K562 (cell line): ENCODE measurements at regions of chr6 and their contacts with region 1.

Region 1: GRCh38 chr6:46221222-46221793 is 50.5 kb upstream of the ENPP5 start:
- DNase-seq: peak; percentile 18 to 41 (median 35)
- ATAC-seq: peak; percentile 77
- H3K4me3 ChIP-seq: no peak overlapping the region
- H3K27ac ChIP-seq: no peak overlapping the region
- H3K4me1 ChIP-seq: no peaks in the 10 kb centered on the region
- H3K27me3 ChIP-seq: no peaks in the 10 kb centered on the region
- CTCF ChIP-seq: peak; percentile 46 to 75 (median 60); a peak in 5 of 6 replicates
- EP300 ChIP-seq: no peak
- POLR2A ChIP-seq: no peak
- RAD21 ChIP-seq: peak; percentile 56 to 72

Region 2: DNA sequence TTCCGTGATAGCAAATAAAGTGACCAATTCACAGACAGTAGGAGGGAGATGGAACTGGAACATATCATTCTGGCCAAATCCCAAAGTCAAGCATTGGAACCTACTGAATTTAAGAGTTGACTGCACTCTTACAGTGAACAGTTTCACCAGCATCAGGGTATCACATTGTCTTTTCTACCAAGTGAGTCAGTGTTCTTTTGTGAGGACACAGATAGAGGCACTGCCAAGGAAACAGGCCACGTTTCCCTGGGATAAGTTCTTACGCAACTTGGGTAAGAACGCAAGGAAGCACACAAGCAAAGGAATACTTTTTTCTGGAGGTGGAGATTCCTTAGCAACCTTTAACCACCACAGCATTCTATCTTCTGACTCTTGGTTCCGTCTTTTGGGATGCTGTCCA is 21.9 kb before region 1 on chr6:
- CTCF ChIA-PET with region 1: no interaction called
- POLR2A ChIA-PET with region 1: no interaction called
- in situ Hi-C with region 1: no loop called
- intact Hi-C with region 1: no loop called
- DNase-seq: no peak
- ATAC-seq: no peak
- H3K4me3 ChIP-seq: no peak overlapping the region
- H3K27ac ChIP-seq: no peak overlapping the region
- H3K4me1 ChIP-seq: no peaks in the 10 kb centered on the region
- H3K27me3 ChIP-seq: no peaks in the 10 kb centered on the region
- CTCF ChIP-seq: no peak
- EP300 ChIP-seq: no peak
- POLR2A ChIP-seq: no peak
- RAD21 ChIP-seq: no peak

Region 3: GRCh38 chr6:46347669-46348068 is 126.4 kb after region 1 on chr6:
- CTCF ChIA-PET with region 1: no interaction called
- POLR2A ChIA-PET with region 1: no interaction called
- in situ Hi-C with region 1: no loop called
- intact Hi-C with region 1: no loop called
- DNase-seq: no peak
- ATAC-seq: no peak
- H3K4me3 ChIP-seq: no peak overlapping the region
- H3K27ac ChIP-seq: no peak overlapping the region
- H3K4me1 ChIP-seq: peaks cover 0 to 2% of the 10 kb centered on the region in 2 experiments; a peak in 2 of 5 replicates
- H3K27me3 ChIP-seq: no peaks in the 10 kb centered on the region
- CTCF ChIP-seq: no peak
- EP300 ChIP-seq: no peak
- POLR2A ChIP-seq: no peak
- RAD21 ChIP-seq: no peak

Region 4: GRCh38 chr6:46410334-46410953 is 189.1 kb after region 1 on chr6:
- CTCF ChIA-PET with region 1: interaction called, 7 read pairs
- POLR2A ChIA-PET with region 1: no interaction called
- in situ Hi-C with region 1: no loop called
- intact Hi-C with region 1: loop called (anchors 1 kb)
- DNase-seq: peak; percentile 35 to 45 (median 40)
- ATAC-seq: peak; percentile 54; the same call in 1 of the 3 replicates
- H3K4me3 ChIP-seq: no peak overlapping the region
- H3K27ac ChIP-seq: no peak overlapping the region
- H3K4me1 ChIP-seq: no peaks in the 10 kb centered on the region
- H3K27me3 ChIP-seq: no peaks in the 10 kb centered on the region
- CTCF ChIP-seq: peak; percentile 59 to 89 (median 73); a peak in 5 of 6 replicates
- EP300 ChIP-seq: no peak
- POLR2A ChIP-seq: no peak
- RAD21 ChIP-seq: peak; percentile 92 to 93

Region 5: GRCh38 chr6:46626228-46626909 is 405.1 kb after region 1 on chr6:
- CTCF ChIA-PET with region 1: no interaction called
- POLR2A ChIA-PET with region 1: no interaction called
- in situ Hi-C with region 1: no loop called
- intact Hi-C with region 1: loop called (anchors 5 kb)
- DNase-seq: peak in 1 of 4 experiments; percentile 19
- ATAC-seq: peak; percentile 62; the same call in 2 of the 3 replicates
- H3K4me3 ChIP-seq: no peak overlapping the region
- H3K27ac ChIP-seq: no peak overlapping the region
- H3K4me1 ChIP-seq: no peaks in the 10 kb centered on the region
- H3K27me3 ChIP-seq: no peaks in the 10 kb centered on the region
- CTCF ChIP-seq: peak in 2 of 3 experiments; percentile 35 to 60; a peak in 4 of 6 replicates
- EP300 ChIP-seq: no peak
- POLR2A ChIP-seq: no peak
- RAD21 ChIP-seq: peak; percentile 63 to 79

Region 6: GRCh38 chr6:46993846-46994245 is 772.5 kb after region 1 on chr6:
- CTCF ChIA-PET with region 1: no interaction called
- POLR2A ChIA-PET with region 1: no interaction called
- in situ Hi-C with region 1: no loop called
- intact Hi-C with region 1: loop called (anchors 5 kb)
- DNase-seq: no peak
- ATAC-seq: no peak
- H3K4me3 ChIP-seq: no peak overlapping the region
- H3K27ac ChIP-seq: no peak overlapping the region
- H3K4me1 ChIP-seq: no peaks in the 10 kb centered on the region
- H3K27me3 ChIP-seq: no peaks in the 10 kb centered on the region
- CTCF ChIP-seq: no peak
- EP300 ChIP-seq: no peak
- POLR2A ChIP-seq: no peak
- RAD21 ChIP-seq: no peak